ENCODE measurements at regions of chr9 and their contacts with region 1.

Region 1: GRCh38 chr9:13397220-13397619 is 117.7 kb upstream of the MPDZ start:
- DNase-seq: no peak
- ATAC-seq: no peak
- H3K4me3 ChIP-seq: no peak overlapping the region
- H3K4me3 Mint-ChIP-seq: no peak overlapping the region
- H3K27ac ChIP-seq: no peak overlapping the region
- H3K27ac Mint-ChIP-seq: no peak overlapping the region
- H3K4me1 ChIP-seq: no peaks in the 10 kb centered on the region
- H3K4me1 Mint-ChIP-seq: no peaks in the 10 kb centered on the region
- H3K27me3 ChIP-seq: no peaks in the 10 kb centered on the region
- H3K27me3 Mint-ChIP-seq: no peaks in the 10 kb centered on the region

Region 2: GRCh38 chr9:13377171-13377925 is 19.9 kb before region 1 on chr9:
- CTCF ChIA-PET with region 1: no interaction called
- POLR2A ChIA-PET with region 1: no interaction called
- intact Hi-C with region 1: loop called in 1 of 2 experiments (anchors 2 kb)
- DNase-seq: no peak
- ATAC-seq: no peak
- H3K4me3 ChIP-seq: no peak overlapping the region
- H3K4me3 Mint-ChIP-seq: no peak overlapping the region
- H3K27ac ChIP-seq: no peak overlapping the region
- H3K27ac Mint-ChIP-seq: no peak overlapping the region
- H3K4me1 ChIP-seq: no peaks in the 10 kb centered on the region
- H3K4me1 Mint-ChIP-seq: peaks cover 0 to 1% (median 0%) of the 10 kb centered on the region in 7 donors
- H3K27me3 ChIP-seq: no peaks in the 10 kb centered on the region
- H3K27me3 Mint-ChIP-seq: no peaks in the 10 kb centered on the region